ENCODE measurements at regions of chr22 and their contacts with region 1.

Region 1: GRCh38 chr22:17095538-17095937 is 10.7 kb downstream of the IL17RA start:
- DNase-seq: no peak
- ATAC-seq: no peak
- H3K4me3 ChIP-seq: no peak overlapping the region
- H3K27ac ChIP-seq: no peak overlapping the region
- H3K4me1 ChIP-seq: peaks cover 19% of the 10 kb centered on the region
- H3K27me3 ChIP-seq: no peaks in the 10 kb centered on the region
- CTCF ChIP-seq: peak in 2 of 3 experiments; percentile 22 to 25; a peak in 2 of 6 replicates
- EP300 ChIP-seq: no peak
- POLR2A ChIP-seq: no peak
- RAD21 ChIP-seq: no peak

Region 2: GRCh38 chr22:17152340-17152739 is 56.8 kb after region 1 on chr22:
- CTCF ChIA-PET with region 1: no interaction called
- POLR2A ChIA-PET with region 1: no interaction called
- RAD21 ChIA-PET with region 1: no interaction called
- SMC1A ChIA-PET with region 1: interaction called, 5 read pairs
- in situ Hi-C with region 1: loop called (anchors 5 kb)
- intact Hi-C with region 1: no loop called
- DNase-seq: no peak
- ATAC-seq: no peak
- H3K4me3 ChIP-seq: no peak overlapping the region
- H3K27ac ChIP-seq: no peak overlapping the region
- H3K4me1 ChIP-seq: peaks cover 2% of the 10 kb centered on the region; the same call in 1 of the 2 replicates
- H3K27me3 ChIP-seq: no peaks in the 10 kb centered on the region
- CTCF ChIP-seq: no peak
- EP300 ChIP-seq: no peak
- POLR2A ChIP-seq: no peak
- RAD21 ChIP-seq: no peak

Measured in GM12878 (cell line).